Activated naive CD4-positive, alpha-beta T cell treated with anti-CD3 and anti-CD28 coated beads for 36 hours (primary cell): ENCODE measurements at regions of chr10 and their contacts with region 1.

Region 1: DNA sequence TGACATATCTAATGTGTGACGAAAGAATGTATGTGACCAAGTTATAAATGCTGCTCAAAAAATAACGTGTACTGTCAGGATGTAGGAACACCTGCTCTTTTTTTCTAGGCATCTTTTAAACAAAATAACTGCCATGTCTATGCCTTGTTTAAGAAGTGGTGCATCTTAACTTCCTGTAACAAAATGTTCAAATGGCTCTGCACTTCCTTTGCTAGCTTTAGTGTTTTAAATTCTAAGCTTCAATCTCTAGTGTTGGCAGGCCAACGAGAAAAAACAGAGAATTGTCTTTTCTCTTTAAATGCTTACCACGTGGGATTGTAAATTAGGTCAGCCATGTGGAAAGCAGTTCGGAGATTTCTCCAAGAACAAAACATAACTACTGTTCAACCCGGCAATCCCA is 14.6 kb upstream of the PDSS1 start:
- DNase-seq: no peak
- H3K4me3 Mint-ChIP-seq: no peak overlapping the region
- H3K27ac Mint-ChIP-seq: peak overlapping the region; percentile 56
- H3K4me1 Mint-ChIP-seq: peaks cover 23% of the 10 kb centered on the region
- H3K27me3 Mint-ChIP-seq: no peaks in the 10 kb centered on the region

Region 2: DNA sequence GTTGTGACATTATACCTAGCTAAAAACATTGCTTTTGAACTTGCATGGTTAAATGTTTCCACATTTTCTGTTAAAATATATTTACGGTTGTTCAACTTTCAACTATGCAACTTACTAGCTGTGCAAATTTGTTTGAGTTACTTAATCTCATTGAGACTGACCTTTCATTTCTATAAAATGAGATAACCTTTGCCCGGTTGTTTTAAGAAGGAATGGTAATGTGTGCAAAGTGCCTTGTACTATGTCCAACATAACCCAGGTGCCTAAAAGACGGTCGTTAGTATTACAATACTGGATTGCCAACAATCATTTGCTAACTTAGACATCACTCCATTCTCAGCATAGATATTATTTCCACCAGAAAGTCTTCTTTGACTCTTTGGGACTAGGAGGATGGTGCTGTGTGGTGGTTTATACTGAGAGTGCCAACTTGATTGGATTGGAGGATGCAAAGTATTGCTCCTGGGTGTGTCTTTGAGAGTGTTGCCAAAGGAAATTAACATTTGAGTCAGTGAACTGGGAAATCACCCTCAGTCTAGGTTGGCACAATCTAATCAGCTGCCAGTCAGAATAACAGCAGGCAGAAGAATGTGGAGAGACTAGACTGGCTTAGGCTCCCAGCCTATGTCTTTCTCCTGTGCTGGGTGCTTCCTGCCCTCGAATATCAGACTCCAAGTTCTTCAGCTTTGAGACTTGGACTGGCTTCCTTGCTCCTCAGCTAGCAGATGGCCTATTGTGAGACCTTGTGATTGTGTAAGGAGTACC is 70.6 kb before region 1 on chr10:
- CTCF ChIA-PET with region 1: interaction called, 4 read pairs
- intact Hi-C with region 1: loop called (anchors 2 kb)
- DNase-seq: no peak
- H3K4me3 Mint-ChIP-seq: no peak overlapping the region
- H3K27ac Mint-ChIP-seq: no peak overlapping the region
- H3K4me1 Mint-ChIP-seq: no peaks in the 10 kb centered on the region
- H3K27me3 Mint-ChIP-seq: no peaks in the 10 kb centered on the region